ENCODE measurements at regions of chr12 and their contacts with region 1.

Region 1: GRCh38 chr12:117367011-117367638 is 5.7 kb upstream of the NOS1 start:
- DNase-seq: peak; percentile 72
- ATAC-seq: no peak
- H3K4me3 Mint-ChIP-seq: no peak overlapping the region
- H3K27ac Mint-ChIP-seq: no peak overlapping the region
- H3K4me1 Mint-ChIP-seq: no peaks in the 10 kb centered on the region
- H3K27me3 Mint-ChIP-seq: peaks cover 26% of the 10 kb centered on the region
- CTCF ChIP-seq: peak; percentile 80

Region 2: GRCh38 chr12:117279606-117280005 is 87.5 kb before region 1 on chr12:
- CTCF ChIA-PET with region 1: no interaction called
- POLR2A ChIA-PET with region 1: no interaction called
- intact Hi-C with region 1: no loop called
- DNase-seq: no peak
- ATAC-seq: no peak
- H3K4me3 Mint-ChIP-seq: no peak overlapping the region
- H3K27ac Mint-ChIP-seq: no peak overlapping the region
- H3K4me1 Mint-ChIP-seq: no peaks in the 10 kb centered on the region
- H3K27me3 Mint-ChIP-seq: peaks cover 12% of the 10 kb centered on the region
- CTCF ChIP-seq: no peak

Region 3: GRCh38 chr12:117352206-117352605 is 14.9 kb before region 1 on chr12:
- CTCF ChIA-PET with region 1: interaction called, 14 read pairs
- POLR2A ChIA-PET with region 1: no interaction called
- intact Hi-C with region 1: no loop called
- DNase-seq: no peak
- ATAC-seq: no peak
- H3K4me3 Mint-ChIP-seq: no peak overlapping the region
- H3K27ac Mint-ChIP-seq: no peak overlapping the region
- H3K4me1 Mint-ChIP-seq: no peaks in the 10 kb centered on the region
- H3K27me3 Mint-ChIP-seq: no peaks in the 10 kb centered on the region
- CTCF ChIP-seq: no peak

Region 4: DNA sequence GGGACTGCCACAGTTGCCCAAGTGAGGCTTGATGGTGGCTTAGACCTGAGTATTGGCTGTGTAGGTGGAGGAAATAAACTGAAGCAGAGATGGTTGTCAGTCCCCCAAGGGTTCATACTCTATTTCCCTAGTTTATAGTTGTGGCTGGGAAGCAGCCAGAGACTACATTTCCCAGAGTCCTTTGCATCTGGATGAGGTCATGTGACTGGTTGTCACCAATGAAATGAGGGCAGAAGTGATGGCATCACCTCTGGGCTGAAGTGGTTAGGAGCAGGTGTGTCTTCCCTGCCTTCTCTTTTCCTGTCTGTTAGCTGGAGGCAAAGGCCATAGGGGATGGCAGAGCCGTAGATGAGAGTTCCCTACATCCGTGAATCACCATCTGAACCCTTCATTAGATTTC is 10.6 kb after region 1 on chr12:
- CTCF ChIA-PET with region 1: interaction called, 14 read pairs
- POLR2A ChIA-PET with region 1: no interaction called
- intact Hi-C with region 1: no loop called
- DNase-seq: no peak
- ATAC-seq: no peak
- H3K4me3 Mint-ChIP-seq: no peak overlapping the region
- H3K27ac Mint-ChIP-seq: no peak overlapping the region
- H3K4me1 Mint-ChIP-seq: no peaks in the 10 kb centered on the region
- H3K27me3 Mint-ChIP-seq: no peaks in the 10 kb centered on the region
- CTCF ChIP-seq: no peak

Measured in activated CD8-positive, alpha-beta T cell treated with anti-CD3 and anti-CD28 coated beads for 36 hours (primary cell).